ENCODE measurements at regions of chr14 and their contacts with region 1.

Region 1: GRCh38 chr14:77040059-77040740 is 11.7 kb upstream of the IRF2BPL start:
- DNase-seq: peak; percentile 91 to 100
- ATAC-seq: peak; percentile 47 to 83 (median 69)
- H3K4me3 ChIP-seq: peak overlapping the region; percentile 28
- H3K4me3 Mint-ChIP-seq: peak overlapping the region; percentile 87
- H3K27ac ChIP-seq: peak overlapping the region; percentile 92
- H3K27ac Mint-ChIP-seq: peak overlapping the region; percentile 96 to 99
- H3K4me1 ChIP-seq: peaks cover 79% of the 10 kb centered on the region
- H3K4me1 Mint-ChIP-seq: peaks cover 73 to 83% of the 10 kb centered on the region in 2 donors
- H3K27me3 ChIP-seq: no peaks in the 10 kb centered on the region
- H3K27me3 Mint-ChIP-seq: no peaks in the 10 kb centered on the region
- CTCF ChIP-seq: no peak

Region 2: DNA sequence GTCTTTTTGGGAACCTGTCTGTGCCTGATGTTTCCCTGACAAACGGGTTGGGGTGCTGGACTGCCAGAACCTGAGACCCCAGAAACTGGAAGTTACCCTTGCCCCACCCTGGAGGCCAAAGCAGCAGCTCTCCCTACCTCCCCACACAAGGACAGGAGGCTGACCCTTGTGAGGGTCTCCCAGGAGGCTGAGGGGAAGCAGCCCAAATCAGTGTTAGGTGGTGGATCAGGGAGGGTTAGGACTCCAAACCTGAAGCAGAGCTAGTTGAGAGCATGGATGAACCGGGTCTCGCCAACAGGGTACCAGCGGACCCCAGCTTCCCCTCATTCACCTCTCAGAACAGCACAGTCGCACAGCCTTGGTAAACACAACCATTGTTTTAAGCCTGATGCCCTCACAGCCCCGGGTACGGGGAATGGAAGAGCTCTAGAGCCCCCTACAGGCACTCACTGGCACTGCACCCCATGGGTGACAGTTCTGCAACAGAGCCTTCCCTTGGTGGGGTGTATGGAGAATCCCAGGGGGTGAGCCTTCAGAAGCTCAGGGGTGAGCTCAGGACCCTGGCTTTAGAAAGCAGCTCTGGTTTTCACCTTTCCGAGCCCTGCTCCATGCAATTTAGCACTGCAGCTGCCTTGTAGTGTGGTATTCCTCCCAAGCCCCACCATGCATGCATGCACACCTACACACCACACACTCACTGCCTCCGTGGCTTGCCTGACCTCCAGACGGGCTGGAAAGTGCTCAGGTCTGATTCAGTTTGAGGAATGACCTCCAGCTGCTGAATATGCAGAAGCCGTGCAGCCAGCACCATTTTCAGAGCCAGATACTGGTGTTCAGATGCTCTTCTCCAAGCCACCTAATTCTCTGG is 653.1 kb before region 1 on chr14:
- intact Hi-C with region 1: no loop called
- DNase-seq: peak; percentile 44 to 64
- ATAC-seq: peak; percentile 70 to 92 (median 75)
- H3K4me3 ChIP-seq: no peak overlapping the region
- H3K4me3 Mint-ChIP-seq: no peak overlapping the region
- H3K27ac ChIP-seq: no peak overlapping the region
- H3K27ac Mint-ChIP-seq: no peak overlapping the region
- H3K4me1 ChIP-seq: no peaks in the 10 kb centered on the region
- H3K4me1 Mint-ChIP-seq: no peaks in the 10 kb centered on the region
- H3K27me3 ChIP-seq: peaks cover 8% of the 10 kb centered on the region
- H3K27me3 Mint-ChIP-seq: peaks cover 40 to 43% of the 10 kb centered on the region in 2 donors
- CTCF ChIP-seq: peak; percentile 72

Region 3: GRCh38 chr14:76767681-76768656 is 272.2 kb before region 1 on chr14:
- intact Hi-C with region 1: loop called (anchors 5 kb)
- DNase-seq: peak; percentile 59 to 87
- ATAC-seq: peak; percentile 94 to 97 (median 94)
- H3K4me3 ChIP-seq: no peak overlapping the region
- H3K4me3 Mint-ChIP-seq: no peak overlapping the region
- H3K27ac ChIP-seq: peak overlapping the region; percentile 76
- H3K27ac Mint-ChIP-seq: peak overlapping the region; percentile 81 to 87
- H3K4me1 ChIP-seq: peaks cover 29% of the 10 kb centered on the region
- H3K4me1 Mint-ChIP-seq: peaks cover 0 to 24% of the 10 kb centered on the region in 2 donors
- H3K27me3 ChIP-seq: no peaks in the 10 kb centered on the region
- H3K27me3 Mint-ChIP-seq: no peaks in the 10 kb centered on the region
- CTCF ChIP-seq: no peak

Region 4: DNA sequence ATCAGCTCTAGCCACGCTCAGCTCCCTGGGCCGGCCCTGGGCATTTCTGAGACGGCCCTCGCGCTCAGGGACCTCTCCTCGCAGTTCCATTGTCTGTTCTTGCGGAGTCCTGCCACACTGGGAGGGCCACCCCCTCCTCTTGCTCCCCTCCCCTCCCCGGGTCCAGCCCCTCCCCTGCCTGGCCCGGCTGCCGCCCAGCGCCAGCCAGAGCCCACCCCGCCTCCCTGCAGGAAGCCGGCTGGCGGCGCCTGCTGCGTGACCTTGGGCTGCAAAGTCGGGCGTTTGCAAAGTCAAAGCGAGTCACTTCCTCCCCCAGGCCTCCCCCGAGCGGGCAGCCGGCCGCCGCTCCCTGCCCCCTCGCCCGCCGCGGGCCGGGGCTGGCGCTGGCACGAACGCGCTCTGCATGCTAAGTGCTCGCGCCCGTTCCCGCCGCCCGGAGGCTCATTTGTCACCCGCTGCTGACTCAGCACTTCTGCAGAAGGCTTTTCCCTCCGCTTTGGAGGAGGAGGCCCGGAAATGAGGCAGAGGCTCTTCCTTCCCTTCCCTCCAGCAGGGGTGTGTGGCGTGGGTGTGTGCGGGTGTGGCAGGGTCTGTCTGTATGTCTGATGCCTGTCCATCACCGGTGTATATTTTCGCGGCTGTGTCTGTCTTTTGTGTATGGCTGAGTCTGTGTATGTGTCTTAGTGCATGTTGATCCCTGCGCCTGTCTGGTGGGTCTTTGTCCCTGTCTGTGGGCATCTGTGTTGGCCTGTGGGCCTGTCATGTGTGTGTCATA is 83.7 kb before region 1 on chr14:
- intact Hi-C with region 1: loop called (anchors 1 kb)
- DNase-seq: peak; percentile 86 to 95
- ATAC-seq: peak; percentile 66 to 89 (median 78)
- H3K4me3 ChIP-seq: peak overlapping the region; percentile 49
- H3K4me3 Mint-ChIP-seq: peak overlapping the region; percentile 88
- H3K27ac ChIP-seq: peak overlapping the region; percentile 98
- H3K27ac Mint-ChIP-seq: peak overlapping the region; percentile 96 to 98
- H3K4me1 ChIP-seq: peaks cover 82% of the 10 kb centered on the region
- H3K4me1 Mint-ChIP-seq: peaks cover 43 to 71% of the 10 kb centered on the region in 2 donors
- H3K27me3 ChIP-seq: no peaks in the 10 kb centered on the region
- H3K27me3 Mint-ChIP-seq: no peaks in the 10 kb centered on the region
- CTCF ChIP-seq: no peak

Region 5: DNA sequence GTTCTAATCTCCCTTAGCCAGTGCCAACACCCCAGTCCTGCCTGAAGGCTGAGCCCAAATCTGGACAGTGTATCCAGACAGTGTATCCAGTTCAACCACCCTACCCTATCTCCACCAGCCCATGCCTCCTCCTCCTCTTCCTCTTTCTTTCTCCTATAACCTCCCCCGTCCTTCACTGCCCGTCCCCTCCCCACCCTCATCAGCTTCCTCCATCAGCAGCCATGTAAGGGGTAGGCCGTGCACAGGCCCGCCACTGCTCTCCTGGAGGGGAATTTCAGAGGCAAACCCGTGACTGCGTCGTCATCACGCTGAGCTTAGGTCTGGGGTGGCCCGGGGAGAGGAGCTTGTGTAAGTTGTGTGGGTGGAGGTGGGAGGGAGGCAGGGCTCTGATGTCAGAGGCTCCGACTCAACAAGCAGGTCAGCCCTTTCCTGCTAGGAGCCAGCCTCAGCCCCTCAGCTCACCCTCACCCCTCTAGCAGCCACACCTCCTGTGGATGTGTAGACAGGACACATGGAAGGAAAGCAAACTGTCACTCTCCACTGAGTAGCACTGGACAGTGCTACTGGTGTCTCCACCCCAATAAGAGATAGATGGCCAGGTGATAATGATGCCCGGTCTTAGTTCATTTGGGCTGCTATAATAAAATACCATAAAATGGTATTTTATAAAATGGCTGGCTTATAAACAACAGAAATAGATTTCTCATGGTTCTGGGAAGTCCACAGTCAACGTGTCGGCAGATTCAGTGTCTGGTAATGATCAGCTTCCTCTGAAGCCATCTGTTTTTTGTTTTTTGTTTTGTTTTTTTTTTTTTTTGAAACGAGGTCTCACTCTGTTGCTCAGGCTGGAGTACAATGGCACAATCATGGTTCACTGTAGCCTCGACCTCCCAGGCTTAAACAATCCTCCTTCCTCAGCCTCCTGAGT is 62.1 kb before region 1 on chr14:
- intact Hi-C with region 1: loop called (anchors 2 kb)
- DNase-seq: peak; percentile 81 to 93
- ATAC-seq: peak; percentile 86 to 97 (median 93)
- H3K4me3 ChIP-seq: no peak overlapping the region
- H3K4me3 Mint-ChIP-seq: no peak overlapping the region
- H3K27ac ChIP-seq: peak overlapping the region; percentile 36
- H3K27ac Mint-ChIP-seq: peak overlapping the region; percentile 66 to 85
- H3K4me1 ChIP-seq: peaks cover 16% of the 10 kb centered on the region
- H3K4me1 Mint-ChIP-seq: peaks cover 0 to 10% of the 10 kb centered on the region in 2 donors
- H3K27me3 ChIP-seq: no peaks in the 10 kb centered on the region
- H3K27me3 Mint-ChIP-seq: no peaks in the 10 kb centered on the region
- CTCF ChIP-seq: no peak

Region 6: GRCh38 chr14:77028384-77029231 is 11.6 kb before region 1 on chr14 and contains the start of gene IRF2BPL:
- intact Hi-C with region 1: loop called (anchors 1 kb)
- DNase-seq: peak; percentile 91 to 99
- ATAC-seq: peak; percentile 58 to 82 (median 70)
- H3K4me3 ChIP-seq: peak within 1 kb of the TSS; percentile 93
- H3K4me3 Mint-ChIP-seq: peak within 1 kb of the TSS; percentile 95
- H3K27ac ChIP-seq: peak within 1 kb of the TSS; percentile 100
- H3K27ac Mint-ChIP-seq: peak within 1 kb of the TSS; percentile 96 to 98
- H3K4me1 ChIP-seq: peaks cover 64% of the 10 kb centered on the region
- H3K4me1 Mint-ChIP-seq: peaks cover 47 to 48% of the 10 kb centered on the region in 2 donors
- H3K27me3 ChIP-seq: no peaks in the 10 kb centered on the region
- H3K27me3 Mint-ChIP-seq: no peaks in the 10 kb centered on the region
- CTCF ChIP-seq: no peak
- total RNA-seq, gene IRF2BPL: 39.3 to 46.5 (median 46.3) TPM